Caco-2 (cell line): ENCODE measurements at regions of chr6 and their contacts with region 1.

Region 1: DNA sequence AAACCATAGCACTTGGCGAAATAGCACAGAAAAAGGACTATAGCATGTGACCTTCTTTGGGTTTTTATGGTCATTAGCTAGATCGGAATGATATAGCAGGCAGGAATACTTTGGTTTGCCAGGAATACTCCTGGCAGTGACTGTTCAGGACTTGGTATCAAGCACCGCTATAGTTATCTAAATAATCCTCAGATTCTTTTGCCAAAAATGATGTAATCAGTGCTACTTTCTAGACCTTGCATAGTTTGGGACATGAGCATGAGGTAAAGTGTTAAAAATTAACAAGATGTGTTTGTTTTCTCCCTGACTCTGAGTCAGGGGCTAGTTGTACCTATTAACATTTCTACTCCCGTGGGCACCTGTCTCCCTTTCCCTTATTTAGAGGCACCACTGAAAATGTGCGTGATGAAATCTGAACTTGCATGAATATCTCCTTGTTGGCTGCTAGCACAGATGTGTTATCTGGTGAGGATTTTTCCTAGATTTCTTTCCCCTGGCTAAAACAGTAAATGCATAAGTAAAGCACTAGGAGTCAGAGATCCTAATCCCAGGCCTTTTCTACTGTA is 511.0 kb downstream of the CDKAL1 start:
- DNase-seq: peak in 1 of 2 experiments; percentile 12
- H3K4me3 ChIP-seq: no peak overlapping the region
- H3K4me3 Mint-ChIP-seq: no peak overlapping the region
- H3K27ac Mint-ChIP-seq: peak overlapping the region; percentile 37
- H3K4me1 ChIP-seq: peaks cover 11% of the 10 kb centered on the region; the same call in 1 of the 2 replicates
- H3K4me1 Mint-ChIP-seq: peaks cover 12% of the 10 kb centered on the region
- H3K27me3 ChIP-seq: no peaks in the 10 kb centered on the region
- H3K27me3 Mint-ChIP-seq: no peaks in the 10 kb centered on the region
- CTCF ChIP-seq: no peak

Region 2: GRCh38 chr6:21082091-21082490 is 36.9 kb after region 1 on chr6:
- CTCF ChIA-PET with region 1: no interaction called
- POLR2A ChIA-PET with region 1: no interaction called
- intact Hi-C with region 1: loop called (anchors 2 kb)
- DNase-seq: peak in 1 of 2 experiments; percentile 34
- H3K4me3 ChIP-seq: no peak overlapping the region
- H3K4me3 Mint-ChIP-seq: peak overlapping the region; percentile 1
- H3K27ac Mint-ChIP-seq: no peak overlapping the region
- H3K4me1 ChIP-seq: peaks cover 31% of the 10 kb centered on the region
- H3K4me1 Mint-ChIP-seq: peaks cover 21% of the 10 kb centered on the region
- H3K27me3 ChIP-seq: no peaks in the 10 kb centered on the region
- H3K27me3 Mint-ChIP-seq: no peaks in the 10 kb centered on the region
- CTCF ChIP-seq: no peak

Region 3: GRCh38 chr6:21137700-21138335 is 92.6 kb after region 1 on chr6:
- CTCF ChIA-PET with region 1: no interaction called
- POLR2A ChIA-PET with region 1: no interaction called
- intact Hi-C with region 1: loop called (anchors 1 kb)
- DNase-seq: no peak
- H3K4me3 ChIP-seq: no peak overlapping the region
- H3K4me3 Mint-ChIP-seq: no peak overlapping the region
- H3K27ac Mint-ChIP-seq: no peak overlapping the region
- H3K4me1 ChIP-seq: no peaks in the 10 kb centered on the region
- H3K4me1 Mint-ChIP-seq: no peaks in the 10 kb centered on the region
- H3K27me3 ChIP-seq: no peaks in the 10 kb centered on the region
- H3K27me3 Mint-ChIP-seq: no peaks in the 10 kb centered on the region
- CTCF ChIP-seq: no peak